B cell (primary cell): ENCODE measurements at regions of chr3 and their contacts with region 1.

Region 1: DNA sequence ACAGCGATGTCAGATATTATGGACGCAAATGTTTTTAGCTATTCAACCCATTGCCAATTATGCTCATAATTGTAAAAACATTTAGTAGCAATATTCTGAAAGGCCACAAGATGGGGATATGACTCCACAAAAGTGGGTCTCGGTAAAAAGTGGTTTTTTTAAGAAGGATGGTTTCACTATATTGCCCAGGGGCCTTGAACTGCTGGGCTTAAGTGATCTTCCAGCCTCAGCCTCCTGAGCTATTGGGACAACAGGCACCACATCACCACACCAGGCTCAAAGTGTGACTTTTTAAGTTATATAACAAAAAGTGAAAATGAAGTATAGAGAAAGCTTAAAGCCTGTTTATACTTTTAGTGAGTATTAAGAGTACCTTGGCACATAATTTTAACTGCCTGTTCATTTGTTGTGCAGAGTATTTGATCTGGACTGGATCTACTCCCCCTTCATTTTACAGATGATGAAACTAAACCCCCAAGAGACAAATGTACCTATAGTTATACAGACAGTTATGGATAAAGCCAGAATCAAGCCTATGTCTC is 9.4 kb downstream of the NAA50 start:
- DNase-seq: peak; percentile 80
- ATAC-seq: peak; percentile 85
- H3K4me3 ChIP-seq: no peak overlapping the region
- H3K4me3 Mint-ChIP-seq: no peak overlapping the region
- H3K27ac ChIP-seq: peak overlapping the region in 1 of 2 donors; percentile 32
- H3K27ac Mint-ChIP-seq: peak overlapping the region; percentile 68
- H3K4me1 ChIP-seq: peaks cover 7 to 8% of the 10 kb centered on the region in 2 donors
- H3K4me1 Mint-ChIP-seq: peaks cover 44% of the 10 kb centered on the region
- H3K27me3 ChIP-seq: no peaks in the 10 kb centered on the region
- H3K27me3 Mint-ChIP-seq: no peaks in the 10 kb centered on the region
- CTCF ChIP-seq: peak; percentile 80

Region 2: GRCh38 chr3:113721636-113722035 is 15.0 kb before region 1 on chr3:
- CTCF ChIA-PET with region 1: interaction called, 14 read pairs
- POLR2A ChIA-PET with region 1: no interaction called
- intact Hi-C with region 1: no loop called
- DNase-seq: no peak
- ATAC-seq: no peak
- H3K4me3 ChIP-seq: no peak overlapping the region
- H3K4me3 Mint-ChIP-seq: no peak overlapping the region
- H3K27ac ChIP-seq: peak overlapping the region in 1 of 2 donors; percentile 24
- H3K27ac Mint-ChIP-seq: no peak overlapping the region
- H3K4me1 ChIP-seq: peaks cover 0 to 4% of the 10 kb centered on the region in 2 donors
- H3K4me1 Mint-ChIP-seq: peaks cover 17% of the 10 kb centered on the region
- H3K27me3 ChIP-seq: no peaks in the 10 kb centered on the region
- H3K27me3 Mint-ChIP-seq: no peaks in the 10 kb centered on the region
- CTCF ChIP-seq: no peak

Region 3: DNA sequence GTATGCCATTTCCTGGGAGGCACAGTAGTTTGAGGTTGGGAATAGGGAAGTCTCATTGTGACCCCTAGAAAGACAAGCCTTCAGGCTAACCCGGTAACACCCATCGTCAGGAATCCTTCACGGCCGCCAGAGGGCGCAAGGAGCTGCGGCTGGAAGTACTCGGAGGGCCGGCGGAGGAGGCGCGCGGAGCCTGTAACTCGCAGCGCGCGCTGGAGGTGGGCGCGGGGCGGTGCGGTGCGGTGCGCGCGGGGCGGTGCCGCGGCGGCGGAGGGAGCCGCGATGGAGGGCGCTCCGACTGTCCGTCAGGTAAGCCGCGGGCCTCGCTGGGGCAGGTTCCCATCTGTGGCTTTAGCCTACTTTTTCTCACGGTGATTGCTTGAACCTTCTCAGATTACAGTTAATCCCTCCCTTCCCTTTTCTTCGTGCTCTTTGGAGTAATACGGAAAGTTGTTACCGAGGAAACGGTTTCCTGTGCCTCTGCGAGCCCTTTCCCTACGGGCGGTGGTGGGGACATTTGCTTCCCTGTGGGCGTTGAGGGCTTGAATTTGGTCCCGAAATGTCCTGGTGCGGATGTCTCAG is 102.1 kb after region 1 on chr3 and contains the start of gene GRAMD1C:
- CTCF ChIA-PET with region 1: interaction called, 22 read pairs
- POLR2A ChIA-PET with region 1: no interaction called
- intact Hi-C with region 1: no loop called
- DNase-seq: peak; percentile 92
- ATAC-seq: peak; percentile 99
- H3K4me3 ChIP-seq: peak within 1 kb of the TSS; percentile 59 to 84 (median 70)
- H3K4me3 Mint-ChIP-seq: peak within 1 kb of the TSS; percentile 91
- H3K27ac ChIP-seq: peak within 1 kb of the TSS; percentile 8 to 62
- H3K27ac Mint-ChIP-seq: peak within 1 kb of the TSS; percentile 71
- H3K4me1 ChIP-seq: peaks cover 7 to 13% of the 10 kb centered on the region in 2 donors
- H3K4me1 Mint-ChIP-seq: peaks cover 29% of the 10 kb centered on the region
- H3K27me3 ChIP-seq: no peaks in the 10 kb centered on the region
- H3K27me3 Mint-ChIP-seq: no peaks in the 10 kb centered on the region
- CTCF ChIP-seq: peak; percentile 84
- total RNA-seq, gene GRAMD1C: 47.1 and 52.5 TPM in 2 replicates

Region 4: DNA sequence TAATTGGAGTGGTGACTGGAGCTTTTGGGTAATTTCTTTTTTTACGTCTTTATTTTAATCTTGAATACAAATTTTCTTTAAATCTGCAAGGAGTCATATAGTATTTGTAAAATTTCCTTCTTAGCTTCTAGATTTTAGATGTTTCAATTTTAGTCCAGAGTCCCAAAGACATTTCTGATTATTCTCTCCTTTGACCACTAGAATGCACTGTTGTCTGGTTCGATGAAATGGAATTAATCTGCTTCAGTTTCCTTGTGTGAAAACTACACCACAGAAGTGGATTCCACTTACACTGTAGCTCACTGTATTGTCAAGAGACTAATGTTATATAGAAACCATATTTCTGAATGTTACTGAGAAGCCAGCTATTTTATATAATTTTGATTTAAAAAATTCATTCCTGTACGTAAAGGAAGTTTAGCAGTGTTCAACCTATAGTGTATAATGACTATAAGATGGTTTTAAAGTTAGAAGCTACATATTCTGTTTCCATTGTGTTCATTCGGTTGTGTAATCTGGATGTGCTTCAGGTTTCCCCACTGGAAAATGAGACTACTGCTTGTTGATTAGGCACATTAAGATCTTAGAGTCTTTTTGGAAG is 108.1 kb after region 1 on chr3:
- CTCF ChIA-PET with region 1: interaction called, 22 read pairs
- POLR2A ChIA-PET with region 1: no interaction called
- intact Hi-C with region 1: no loop called
- DNase-seq: peak; percentile 53
- ATAC-seq: peak; percentile 36
- H3K4me3 ChIP-seq: no peak overlapping the region
- H3K4me3 Mint-ChIP-seq: no peak overlapping the region
- H3K27ac ChIP-seq: no peak overlapping the region
- H3K27ac Mint-ChIP-seq: no peak overlapping the region
- H3K4me1 ChIP-seq: peaks cover 0 to under 1% of the 10 kb centered on the region in 2 donors
- H3K4me1 Mint-ChIP-seq: peaks cover 12% of the 10 kb centered on the region
- H3K27me3 ChIP-seq: no peaks in the 10 kb centered on the region
- H3K27me3 Mint-ChIP-seq: no peaks in the 10 kb centered on the region
- CTCF ChIP-seq: peak; percentile 75

Region 5: DNA sequence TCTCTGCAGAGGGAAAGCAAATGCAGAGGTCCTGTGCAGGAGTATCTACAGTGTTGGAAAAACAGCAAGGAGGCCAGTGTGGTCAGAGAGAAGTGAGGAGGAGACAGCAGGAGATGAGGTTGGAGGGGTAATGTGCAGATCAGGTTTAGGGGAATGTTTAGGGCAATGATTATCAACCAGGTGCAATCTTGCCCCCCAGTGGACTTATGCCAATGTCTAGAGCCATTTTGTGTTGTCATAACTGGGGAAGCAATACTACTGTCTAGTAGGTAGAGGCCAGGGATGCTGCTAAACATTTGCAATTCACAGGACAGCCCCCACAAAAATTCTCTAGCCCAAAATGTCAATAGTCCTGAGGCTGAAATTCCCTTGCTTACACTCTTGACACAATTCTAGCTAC is 306.6 kb after region 1 on chr3:
- CTCF ChIA-PET with region 1: interaction called, 13 read pairs
- POLR2A ChIA-PET with region 1: no interaction called
- intact Hi-C with region 1: loop called (anchors 1 kb)
- DNase-seq: peak; percentile 55
- ATAC-seq: peak; percentile 61
- H3K4me3 ChIP-seq: no peak overlapping the region
- H3K4me3 Mint-ChIP-seq: no peak overlapping the region
- H3K27ac ChIP-seq: no peak overlapping the region
- H3K27ac Mint-ChIP-seq: peak overlapping the region; percentile 4
- H3K4me1 ChIP-seq: no peaks in the 10 kb centered on the region
- H3K4me1 Mint-ChIP-seq: peaks cover 5% of the 10 kb centered on the region
- H3K27me3 ChIP-seq: no peaks in the 10 kb centered on the region
- H3K27me3 Mint-ChIP-seq: no peaks in the 10 kb centered on the region
- CTCF ChIP-seq: peak; percentile 22

Region 6: GRCh38 chr3:114584734-114585371 is 848.2 kb after region 1 on chr3:
- CTCF ChIA-PET with region 1: no interaction called
- POLR2A ChIA-PET with region 1: no interaction called
- intact Hi-C with region 1: no loop called
- DNase-seq: peak; percentile 34
- ATAC-seq: peak; percentile 76
- H3K4me3 ChIP-seq: peak overlapping the region in 1 of 5 experiments; percentile 22
- H3K4me3 Mint-ChIP-seq: peak overlapping the region; percentile 54
- H3K27ac ChIP-seq: peak overlapping the region; percentile 0 to 55
- H3K27ac Mint-ChIP-seq: peak overlapping the region; percentile 46
- H3K4me1 ChIP-seq: no peaks in the 10 kb centered on the region
- H3K4me1 Mint-ChIP-seq: peaks cover 29% of the 10 kb centered on the region
- H3K27me3 ChIP-seq: no peaks in the 10 kb centered on the region
- H3K27me3 Mint-ChIP-seq: no peaks in the 10 kb centered on the region
- CTCF ChIP-seq: peak; percentile 12